Right ventricle myocardium superior (tissue), 1 donor: ENCODE measurements at regions of chr5 and their contacts with region 1.

Region 1: GRCh38 chr5:76402886-76403765 is at the start of gene IQGAP2:
- DNase-seq: peak; percentile 82
- ATAC-seq: peak; percentile 91
- total RNA-seq, gene IQGAP2: 4.2 TPM

Region 2: GRCh38 chr5:76292620-76293322 is 110.4 kb before region 1 on chr5:
- intact Hi-C with region 1: no loop called
- DNase-seq: no peak
- ATAC-seq: peak; percentile 68

Region 3: GRCh38 chr5:76560952-76561891 is 158.1 kb after region 1 on chr5:
- intact Hi-C with region 1: loop called (anchors 10 kb)
- DNase-seq: no peak
- ATAC-seq: no peak